Calu3 (cell line): ENCODE measurements at regions of chr4 and their contacts with region 1.

Region 1: GRCh38 chr4:15396157-15396800 is 31.6 kb upstream of the C1QTNF7 start:
- DNase-seq: peak; percentile 28
- H3K4me3 Mint-ChIP-seq: no peak overlapping the region
- H3K27ac Mint-ChIP-seq: no peak overlapping the region
- H3K4me1 Mint-ChIP-seq: peaks cover 9% of the 10 kb centered on the region
- H3K27me3 Mint-ChIP-seq: peaks cover 25% of the 10 kb centered on the region
- CTCF ChIP-seq: peak; percentile 27

Region 2: DNA sequence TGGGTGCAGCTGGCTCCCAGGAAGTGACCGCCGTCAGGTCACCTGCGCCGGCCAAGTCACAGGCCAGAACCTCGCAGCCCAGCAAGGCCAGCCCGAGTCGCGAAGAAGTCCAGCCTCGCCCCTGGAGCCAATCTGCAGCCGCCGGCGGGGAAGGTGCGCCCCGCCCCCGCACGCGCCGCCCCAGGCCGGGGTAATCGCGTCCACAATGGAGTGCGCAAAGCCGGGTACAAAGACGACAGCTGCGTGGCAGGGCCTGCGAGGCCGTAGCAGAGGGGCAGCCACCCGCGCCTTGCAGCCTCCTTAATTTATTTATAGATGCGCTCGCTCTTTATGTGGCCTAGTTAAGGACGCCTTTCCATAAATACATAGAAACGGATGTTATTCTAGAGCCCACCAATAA is 533.4 kb before region 1 on chr4:
- CTCF ChIA-PET with region 1: no interaction called
- intact Hi-C with region 1: no loop called
- DNase-seq: no peak
- H3K4me3 Mint-ChIP-seq: no peak overlapping the region
- H3K27ac Mint-ChIP-seq: no peak overlapping the region
- H3K4me1 Mint-ChIP-seq: no peaks in the 10 kb centered on the region
- H3K27me3 Mint-ChIP-seq: peaks cover 8% of the 10 kb centered on the region
- CTCF ChIP-seq: no peak

Region 3: GRCh38 chr4:15231265-15232091 is 164.8 kb before region 1 on chr4:
- CTCF ChIA-PET with region 1: no interaction called
- intact Hi-C with region 1: loop called (anchors 10 kb)
- DNase-seq: peak; percentile 68
- H3K4me3 Mint-ChIP-seq: no peak overlapping the region
- H3K27ac Mint-ChIP-seq: no peak overlapping the region
- H3K4me1 Mint-ChIP-seq: no peaks in the 10 kb centered on the region
- H3K27me3 Mint-ChIP-seq: peaks cover 2% of the 10 kb centered on the region
- CTCF ChIP-seq: peak; percentile 35

Region 4: DNA sequence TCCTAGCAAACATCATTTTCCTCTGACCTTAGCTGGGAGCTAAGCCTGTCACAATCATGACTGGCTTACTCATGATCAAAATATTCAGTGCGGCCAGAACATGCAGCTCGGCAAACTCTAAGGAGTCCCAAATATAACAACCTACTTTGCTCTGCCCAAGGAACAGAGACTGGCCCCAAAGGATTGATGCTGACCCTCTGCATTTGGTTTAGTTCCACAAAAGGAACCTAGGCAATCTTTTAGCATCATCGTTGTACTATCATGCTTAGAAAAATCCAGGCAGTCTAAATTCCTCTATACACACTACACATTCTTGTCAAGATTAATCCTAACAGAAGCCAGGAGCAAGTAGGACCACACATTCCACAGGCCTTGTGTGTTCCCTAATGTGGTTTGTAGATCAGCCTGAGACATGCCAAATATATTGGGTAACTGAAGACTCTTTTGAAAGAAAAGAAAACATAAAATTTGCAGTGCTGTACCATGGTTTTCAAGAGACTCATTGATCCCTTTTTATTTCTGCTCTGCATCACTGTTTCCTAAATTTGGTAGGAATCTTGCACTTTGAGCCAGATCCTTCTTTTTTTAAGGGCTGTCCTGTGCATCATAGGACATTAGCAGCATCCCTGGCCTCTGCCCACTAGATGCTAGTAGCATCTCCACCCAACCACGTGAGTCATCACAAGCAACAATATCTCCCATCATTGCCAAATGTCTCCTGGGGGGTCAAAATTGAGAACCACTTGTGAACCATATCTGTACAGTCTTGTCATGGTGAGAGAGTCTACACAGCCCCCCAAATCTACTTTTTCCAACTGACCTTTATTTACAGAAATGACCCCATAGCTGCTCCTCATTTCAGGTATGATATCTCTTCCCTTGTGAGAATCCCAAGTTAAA is 55.8 kb after region 1 on chr4:
- CTCF ChIA-PET with region 1: no interaction called
- intact Hi-C with region 1: loop called (anchors 5 kb)
- DNase-seq: no peak
- H3K4me3 Mint-ChIP-seq: no peak overlapping the region
- H3K27ac Mint-ChIP-seq: no peak overlapping the region
- H3K4me1 Mint-ChIP-seq: peaks cover 12% of the 10 kb centered on the region
- H3K27me3 Mint-ChIP-seq: peaks cover 30% of the 10 kb centered on the region
- CTCF ChIP-seq: no peak